ENCODE measurements at regions of chr1 and their contacts with region 1.

Region 1: DNA sequence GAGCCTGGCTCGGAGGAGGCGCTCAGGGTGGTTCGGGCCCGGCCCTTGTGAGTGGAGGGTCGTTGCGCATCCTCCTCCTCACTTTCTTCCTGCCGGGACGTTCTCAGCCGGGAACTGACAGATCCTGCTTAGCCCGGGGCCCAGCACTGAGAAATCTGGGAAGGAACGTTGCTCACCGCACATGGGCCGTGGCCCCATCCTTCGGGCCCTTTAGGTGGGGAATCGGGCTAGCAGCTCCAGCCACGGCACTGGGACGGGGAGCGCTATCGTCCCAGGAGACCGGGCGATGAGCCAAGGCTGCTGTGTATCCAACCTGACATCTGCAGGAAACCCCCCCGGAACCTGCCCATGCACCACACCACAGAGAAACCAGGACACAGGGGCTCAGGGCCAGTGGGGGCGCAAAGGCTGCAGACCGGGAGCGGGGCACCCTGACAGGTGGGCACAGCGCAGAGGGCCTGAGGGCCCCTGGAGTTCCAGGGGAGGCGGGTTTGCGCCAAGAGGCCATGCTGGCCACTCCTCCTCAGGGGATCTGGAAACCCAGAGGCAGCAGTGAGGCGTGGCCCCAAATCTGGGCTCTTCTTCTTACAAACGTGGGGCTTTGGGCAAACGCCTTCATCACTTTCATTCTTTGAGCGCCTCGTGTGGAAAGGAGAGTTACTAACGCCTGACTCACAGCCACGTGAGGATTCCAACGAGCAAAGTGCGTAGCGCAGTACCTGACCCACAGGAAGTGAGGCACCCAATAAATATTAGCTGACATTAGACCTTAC is at the start of gene SH2D5:
- DNase-seq: peak; percentile 87
- ATAC-seq: peak; percentile 88
- H3K4me3 Mint-ChIP-seq: peak within 1 kb of the TSS; percentile 74
- H3K27ac Mint-ChIP-seq: peak within 1 kb of the TSS; percentile 69
- H3K4me1 Mint-ChIP-seq: peaks cover 17% of the 10 kb centered on the region
- H3K27me3 Mint-ChIP-seq: peaks cover 21% of the 10 kb centered on the region
- total RNA-seq, gene SH2D5: 0.32 to 0.51 TPM

Region 2: GRCh38 chr1:20661207-20662109 is 71.3 kb before region 1 on chr1 and contains the start of gene DDOST:
- CTCF ChIA-PET with region 1: interaction called, 3 read pairs
- POLR2A ChIA-PET with region 1: no interaction called
- intact Hi-C with region 1: loop called in 1 of 2 experiments (anchors 1 kb)
- DNase-seq: peak; percentile 97
- ATAC-seq: peak; percentile 97
- H3K4me3 Mint-ChIP-seq: peak within 1 kb of the TSS; percentile 91
- H3K27ac Mint-ChIP-seq: peak within 1 kb of the TSS; percentile 100
- H3K4me1 Mint-ChIP-seq: peaks cover 35% of the 10 kb centered on the region
- H3K27me3 Mint-ChIP-seq: no peaks in the 10 kb centered on the region
- total RNA-seq, gene DDOST: 112 to 136 TPM

Region 3: DNA sequence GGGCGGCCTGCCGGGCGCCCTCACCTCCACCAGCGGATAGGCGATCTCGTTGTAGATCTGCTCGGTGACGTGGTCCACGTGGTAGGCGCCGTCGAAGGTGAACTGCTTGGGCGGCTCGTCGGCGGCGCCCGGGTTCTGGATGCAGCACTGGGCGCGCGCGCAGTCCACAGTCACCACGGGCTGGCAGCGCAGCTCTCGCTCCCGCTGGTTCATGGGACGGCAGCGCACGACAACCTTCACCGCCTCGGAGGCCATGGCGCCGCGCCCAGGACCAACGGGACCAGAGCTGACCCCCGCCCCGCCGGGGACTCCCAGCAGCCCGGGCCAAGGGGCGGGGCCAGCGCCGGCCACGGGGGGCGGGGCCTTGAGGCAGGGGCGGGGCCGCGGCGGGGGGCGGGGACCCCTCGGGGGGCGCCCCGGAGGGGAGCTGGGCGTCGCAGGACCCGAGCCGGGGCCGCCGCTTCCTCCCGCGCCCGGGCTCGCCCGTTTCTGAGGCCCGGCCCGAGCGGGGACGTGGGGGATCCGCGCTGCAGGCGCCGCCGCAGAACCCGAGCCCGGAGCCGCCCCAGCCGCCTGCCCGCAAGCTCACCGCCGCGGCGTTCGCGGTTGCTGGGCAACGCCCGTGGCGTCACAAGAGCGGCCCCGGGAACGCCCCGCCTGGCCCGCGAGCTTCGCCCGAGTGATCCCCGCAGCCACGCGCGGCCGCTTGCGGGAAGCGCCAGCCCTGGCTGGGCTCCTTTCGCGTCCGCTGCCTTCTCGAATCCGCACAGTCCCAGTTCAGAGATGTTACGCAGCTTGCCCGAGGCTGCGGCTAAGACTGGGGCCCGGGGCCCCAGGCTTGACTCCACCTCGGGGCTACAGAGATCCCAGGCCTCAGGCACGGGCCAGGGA is 15.1 kb before region 1 on chr1 and contains the start of gene KIF17:
- CTCF ChIA-PET with region 1: interaction called, 5 read pairs
- POLR2A ChIA-PET with region 1: no interaction called
- intact Hi-C with region 1: loop called in 1 of 2 experiments (anchors 1 kb)
- DNase-seq: peak; percentile 77
- ATAC-seq: peak; percentile 78
- H3K4me3 Mint-ChIP-seq: peak within 1 kb of the TSS; percentile 36
- H3K27ac Mint-ChIP-seq: no peak within 1 kb of the TSS
- H3K4me1 Mint-ChIP-seq: peaks cover 8% of the 10 kb centered on the region
- H3K27me3 Mint-ChIP-seq: peaks cover 24% of the 10 kb centered on the region
- total RNA-seq, gene KIF17: 0.25 TPM in 1 of 2 experiments, not detected in the other